OCI-LY7 (cell line): ENCODE measurements at regions of chr14 and their contacts with region 1.

Region 1: DNA sequence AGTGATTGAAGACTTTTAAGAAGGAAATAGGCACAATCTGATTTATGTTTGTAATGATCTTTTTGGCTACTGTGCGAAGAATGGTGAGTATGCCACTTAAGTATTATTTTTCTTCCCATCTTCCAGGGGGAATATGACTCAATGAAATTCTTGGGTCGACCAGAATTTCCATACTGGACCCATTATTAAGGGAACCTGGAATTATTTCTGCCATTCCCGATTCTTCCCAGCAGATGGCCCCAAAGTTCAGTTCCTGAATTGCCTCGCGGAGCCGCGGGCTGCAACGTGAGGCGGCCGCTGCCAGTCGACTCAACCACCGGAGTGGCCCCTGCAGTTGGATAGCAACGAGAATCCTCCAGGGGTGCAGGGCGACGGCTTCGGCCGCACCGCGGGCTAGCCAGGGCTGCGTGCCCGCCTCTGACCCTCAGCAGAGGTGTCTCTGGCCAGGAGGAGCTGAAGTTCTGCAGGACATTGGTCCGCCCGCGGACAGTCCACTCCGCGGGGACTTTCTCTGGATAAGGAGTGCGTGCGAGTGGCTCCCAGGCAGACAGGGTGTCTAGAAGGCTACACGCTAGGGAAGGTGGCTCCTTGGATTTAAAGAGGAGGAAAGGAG is 628 bp upstream of the TSHR start:
- DNase-seq: peak; percentile 88
- H3K4me3 ChIP-seq: peak overlapping the region; percentile 68
- H3K27ac ChIP-seq: peak overlapping the region; percentile 98
- H3K4me1 ChIP-seq: peaks cover 47% of the 10 kb centered on the region
- CTCF ChIP-seq: peak; percentile 94

Region 2: GRCh38 chr14:79369359-79370332 is 1585.1 kb before region 1 on chr14:
- CTCF ChIA-PET with region 1: no interaction called
- POLR2A ChIA-PET with region 1: no interaction called
- intact Hi-C with region 1: no loop called
- DNase-seq: no peak
- H3K4me3 ChIP-seq: no peak overlapping the region
- H3K27ac ChIP-seq: no peak overlapping the region
- H3K4me1 ChIP-seq: no peaks in the 10 kb centered on the region
- CTCF ChIP-seq: no peak

Region 3: DNA sequence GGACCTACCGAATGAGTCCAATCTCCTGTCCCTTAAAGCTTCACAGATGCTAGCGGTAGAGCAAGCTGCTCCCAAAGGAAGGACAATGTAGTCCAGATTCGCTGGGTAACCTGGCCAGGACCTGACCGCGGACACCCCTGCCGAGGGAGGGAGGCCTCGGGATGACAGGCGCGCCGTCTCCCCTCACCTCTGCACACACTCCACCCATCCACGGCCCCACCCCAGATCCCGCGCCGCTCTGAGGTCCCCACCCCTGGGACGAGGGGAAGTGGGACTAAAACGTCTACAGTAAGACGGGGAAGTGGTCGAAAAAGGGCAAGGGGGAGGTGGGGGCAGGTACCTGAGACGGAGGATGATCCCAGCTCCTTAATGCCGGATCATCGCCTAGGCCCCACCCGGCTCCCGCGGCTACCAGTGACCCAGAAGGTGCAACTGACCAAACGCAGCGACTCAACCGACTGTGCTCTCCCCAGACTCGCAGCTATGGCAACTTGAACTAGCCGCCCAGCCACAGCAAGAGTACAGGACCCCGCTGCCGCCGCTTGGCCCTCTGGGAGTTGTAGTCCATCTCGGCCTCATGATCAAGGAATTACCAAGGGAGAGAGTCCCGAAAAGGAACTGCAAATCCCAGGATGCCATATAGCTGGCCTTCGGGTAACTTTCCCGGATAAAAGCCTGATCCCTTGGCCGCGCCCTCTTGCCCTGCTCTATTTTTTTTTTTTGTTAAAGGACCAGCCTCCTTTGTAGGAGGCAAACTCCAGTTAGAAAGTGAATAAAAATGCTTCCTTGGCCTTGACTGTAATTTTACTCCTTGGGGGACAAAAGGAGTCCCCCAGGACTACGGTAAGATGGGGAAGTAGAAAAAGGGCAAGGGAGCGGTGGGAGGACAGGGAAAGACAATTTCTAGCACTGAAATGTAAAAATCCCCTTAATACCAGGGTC is 13.3 kb before region 1 on chr14 and contains the start of gene CEP128:
- CTCF ChIA-PET with region 1: no interaction called
- POLR2A ChIA-PET with region 1: interaction called, 60 read pairs
- intact Hi-C with region 1: no loop called
- DNase-seq: peak; percentile 97
- H3K4me3 ChIP-seq: peak within 1 kb of the TSS; percentile 91
- H3K27ac ChIP-seq: peak within 1 kb of the TSS; percentile 68
- H3K4me1 ChIP-seq: peaks cover 30% of the 10 kb centered on the region
- CTCF ChIP-seq: no peak
- total RNA-seq, gene CEP128: 71.9 and 76.9 TPM in 2 replicates

Region 4: GRCh38 chr14:81062816-81063215 is 108.0 kb after region 1 on chr14:
- CTCF ChIA-PET with region 1: no interaction called
- POLR2A ChIA-PET with region 1: no interaction called
- intact Hi-C with region 1: loop called (anchors 2 kb)
- DNase-seq: peak; percentile 72
- H3K4me3 ChIP-seq: no peak overlapping the region
- H3K27ac ChIP-seq: no peak overlapping the region
- H3K4me1 ChIP-seq: no peaks in the 10 kb centered on the region
- CTCF ChIP-seq: peak; percentile 87

Region 5: DNA sequence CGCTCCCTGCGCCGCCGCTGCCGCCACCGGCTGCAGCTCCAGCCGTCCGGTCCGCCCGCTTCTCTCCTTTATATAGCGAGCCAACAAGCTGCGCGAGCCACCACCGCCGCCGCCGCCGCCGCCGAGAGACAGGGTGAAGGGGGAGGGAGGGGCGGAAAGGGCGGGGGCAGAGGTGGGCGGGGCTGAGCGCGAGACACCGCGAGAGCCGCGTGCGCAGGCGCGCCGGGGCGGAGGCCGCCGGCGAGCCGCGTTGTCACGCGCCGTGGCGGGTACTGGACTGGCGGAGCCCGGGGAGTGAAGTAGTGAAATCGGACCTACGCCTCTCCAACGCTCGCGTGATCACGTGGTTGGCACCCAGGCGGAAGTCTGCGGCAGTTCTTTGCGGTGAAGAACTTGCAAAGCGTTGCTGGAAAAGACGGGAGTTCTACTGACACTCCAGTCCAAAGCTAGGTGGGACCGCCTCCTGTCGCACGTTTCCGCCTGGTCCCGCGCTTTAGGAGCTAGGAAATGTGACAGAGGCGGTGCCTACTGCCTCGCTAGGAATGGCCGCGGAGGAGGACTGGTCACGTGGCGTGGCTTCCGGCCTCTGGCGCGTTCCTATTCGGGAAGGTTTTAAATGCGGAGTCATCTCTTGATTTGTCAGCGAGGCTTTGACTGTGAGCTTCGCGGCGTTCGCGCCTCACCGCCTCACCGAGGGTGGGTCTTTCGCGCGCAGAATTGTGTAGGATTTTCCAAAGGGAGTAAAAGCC is 266.2 kb after region 1 on chr14 and contains the start of gene GTF2A1:
- CTCF ChIA-PET with region 1: no interaction called
- POLR2A ChIA-PET with region 1: interaction called, 4 read pairs
- intact Hi-C with region 1: loop called (anchors 2 kb)
- DNase-seq: peak; percentile 97
- H3K4me3 ChIP-seq: peak within 1 kb of the TSS; percentile 92
- H3K27ac ChIP-seq: peak within 1 kb of the TSS; percentile 93
- H3K4me1 ChIP-seq: peaks cover 34% of the 10 kb centered on the region
- CTCF ChIP-seq: no peak
- total RNA-seq, gene GTF2A1: 32.5 and 35.1 TPM in 2 replicates